ENCODE measurements at regions of chr1 and their contacts with region 1.

Region 1: GRCh38 chr1:223845810-223846682 is at the start of gene TP53BP2:
- DNase-seq: peak; percentile 68 to 94 (median 83)
- ATAC-seq: peak; percentile 82
- H3K4me3 ChIP-seq: peak within 1 kb of the TSS; percentile 74
- H3K4me3 Mint-ChIP-seq: peak within 1 kb of the TSS; percentile 99
- H3K27ac ChIP-seq: peak within 1 kb of the TSS; percentile 84 to 93
- H3K27ac Mint-ChIP-seq: peak within 1 kb of the TSS; percentile 100
- H3K4me1 ChIP-seq: peaks cover 30% of the 10 kb centered on the region
- H3K4me1 Mint-ChIP-seq: peaks cover 43% of the 10 kb centered on the region
- H3K27me3 ChIP-seq: no peaks in the 10 kb centered on the region
- H3K27me3 Mint-ChIP-seq: no peaks in the 10 kb centered on the region
- CTCF ChIP-seq: peak; percentile 61
- total RNA-seq, gene TP53BP2: 104 to 119 TPM

Region 2: DNA sequence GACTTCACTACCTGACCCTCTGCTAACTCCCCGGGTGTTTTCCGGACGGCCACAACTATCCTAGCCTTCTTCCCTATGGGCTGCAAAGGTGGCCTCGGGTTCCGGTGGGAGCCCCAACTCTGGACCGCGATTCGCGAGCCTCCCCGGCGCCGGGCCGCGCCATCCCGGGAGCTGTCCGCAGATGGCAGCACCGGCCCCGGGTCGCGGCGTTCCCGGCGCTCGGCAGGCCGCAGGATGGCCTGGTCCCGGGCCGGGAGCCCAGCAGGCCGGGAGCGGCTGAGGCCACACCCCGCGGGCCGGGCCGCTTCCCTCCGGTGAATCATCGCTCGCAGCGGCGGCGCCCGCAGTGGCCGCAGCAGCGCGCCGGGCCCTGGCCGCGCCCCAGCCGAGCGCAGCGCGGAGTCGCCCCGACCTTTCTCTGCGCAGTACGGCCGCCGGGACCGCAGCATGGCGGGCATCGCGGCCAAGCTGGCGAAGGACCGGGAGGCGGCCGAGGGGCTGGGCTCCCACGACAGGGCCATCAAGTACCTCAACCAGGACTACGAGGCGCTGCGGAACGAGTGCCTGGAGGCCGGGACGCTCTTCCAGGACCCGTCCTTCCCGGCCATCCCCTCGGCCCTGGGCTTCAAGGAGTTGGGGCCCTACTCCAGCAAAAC is 133.7 kb before region 1 on chr1 and contains the start of gene CAPN2:
- CTCF ChIA-PET with region 1: interaction called, 3 read pairs
- POLR2A ChIA-PET with region 1: interaction called, 4 read pairs
- intact Hi-C with region 1: loop called in 1 of 2 experiments (anchors 5 kb)
- DNase-seq: peak; percentile 16 to 87 (median 52)
- ATAC-seq: peak; percentile 48
- H3K4me3 ChIP-seq: peak within 1 kb of the TSS; percentile 84
- H3K4me3 Mint-ChIP-seq: peak within 1 kb of the TSS; percentile 90
- H3K27ac ChIP-seq: peak within 1 kb of the TSS; percentile 68 to 77
- H3K27ac Mint-ChIP-seq: peak within 1 kb of the TSS; percentile 90
- H3K4me1 ChIP-seq: peaks cover 64% of the 10 kb centered on the region
- H3K4me1 Mint-ChIP-seq: peaks cover 65% of the 10 kb centered on the region
- H3K27me3 ChIP-seq: no peaks in the 10 kb centered on the region
- H3K27me3 Mint-ChIP-seq: no peaks in the 10 kb centered on the region
- CTCF ChIP-seq: peak; percentile 33
- total RNA-seq, gene CAPN2: 110 to 114 TPM

Region 3: GRCh38 chr1:223796210-223796609 is 49.8 kb before region 1 on chr1:
- CTCF ChIA-PET with region 1: no interaction called
- POLR2A ChIA-PET with region 1: no interaction called
- intact Hi-C with region 1: no loop called
- DNase-seq: no peak
- ATAC-seq: no peak
- H3K4me3 ChIP-seq: no peak overlapping the region
- H3K4me3 Mint-ChIP-seq: no peak overlapping the region
- H3K27ac ChIP-seq: no peak overlapping the region
- H3K27ac Mint-ChIP-seq: no peak overlapping the region
- H3K4me1 ChIP-seq: no peaks in the 10 kb centered on the region
- H3K4me1 Mint-ChIP-seq: peaks cover under 1% of the 10 kb centered on the region
- H3K27me3 ChIP-seq: no peaks in the 10 kb centered on the region
- H3K27me3 Mint-ChIP-seq: no peaks in the 10 kb centered on the region
- CTCF ChIP-seq: no peak

Region 4: DNA sequence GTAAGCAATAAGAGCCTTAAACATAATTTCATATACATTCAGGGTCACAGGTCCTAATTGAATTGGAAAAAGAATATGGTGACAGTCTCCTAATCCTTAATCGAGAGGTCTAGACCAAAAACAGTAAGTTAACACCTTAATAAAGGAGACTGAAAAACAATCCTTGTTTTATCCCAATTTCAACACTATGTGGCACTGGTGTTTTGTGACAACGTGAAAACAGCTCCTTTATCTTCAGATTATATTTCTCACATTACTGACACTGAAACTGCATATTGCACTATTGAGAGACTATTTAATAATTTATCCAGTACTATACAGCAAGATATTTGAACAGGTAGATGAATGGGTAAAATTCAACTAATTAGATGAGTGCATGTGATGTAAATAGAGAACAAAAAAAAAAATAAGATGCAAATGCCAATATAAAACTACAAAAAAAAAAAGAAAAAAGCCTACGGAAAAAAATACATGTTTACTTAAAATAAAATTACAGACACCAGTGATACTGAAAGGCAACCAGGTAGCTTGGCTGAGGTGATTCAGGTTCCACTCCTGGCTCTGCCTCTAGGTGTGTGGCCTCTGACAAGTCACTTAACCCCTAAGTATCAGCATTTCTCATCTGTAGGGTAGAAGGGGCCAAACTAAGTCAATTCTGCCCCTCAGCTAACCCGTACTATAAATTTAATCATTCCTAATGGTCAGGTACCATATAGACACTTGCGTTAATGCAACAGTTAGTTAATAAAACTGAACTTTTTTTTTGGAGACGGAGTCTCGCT is 34.2 kb before region 1 on chr1:
- CTCF ChIA-PET with region 1: interaction called, 38 read pairs
- POLR2A ChIA-PET with region 1: interaction called, 30 read pairs
- intact Hi-C with region 1: loop called (anchors 2 kb)
- DNase-seq: peak in 3 of 14 experiments; percentile 58 to 65 (median 64)
- ATAC-seq: peak; percentile 71
- H3K4me3 ChIP-seq: no peak overlapping the region
- H3K4me3 Mint-ChIP-seq: no peak overlapping the region
- H3K27ac ChIP-seq: no peak overlapping the region
- H3K27ac Mint-ChIP-seq: peak overlapping the region; percentile 35
- H3K4me1 ChIP-seq: peaks cover 15% of the 10 kb centered on the region
- H3K4me1 Mint-ChIP-seq: peaks cover 38% of the 10 kb centered on the region
- H3K27me3 ChIP-seq: no peaks in the 10 kb centered on the region
- H3K27me3 Mint-ChIP-seq: no peaks in the 10 kb centered on the region
- CTCF ChIP-seq: peak; percentile 73

Region 5: DNA sequence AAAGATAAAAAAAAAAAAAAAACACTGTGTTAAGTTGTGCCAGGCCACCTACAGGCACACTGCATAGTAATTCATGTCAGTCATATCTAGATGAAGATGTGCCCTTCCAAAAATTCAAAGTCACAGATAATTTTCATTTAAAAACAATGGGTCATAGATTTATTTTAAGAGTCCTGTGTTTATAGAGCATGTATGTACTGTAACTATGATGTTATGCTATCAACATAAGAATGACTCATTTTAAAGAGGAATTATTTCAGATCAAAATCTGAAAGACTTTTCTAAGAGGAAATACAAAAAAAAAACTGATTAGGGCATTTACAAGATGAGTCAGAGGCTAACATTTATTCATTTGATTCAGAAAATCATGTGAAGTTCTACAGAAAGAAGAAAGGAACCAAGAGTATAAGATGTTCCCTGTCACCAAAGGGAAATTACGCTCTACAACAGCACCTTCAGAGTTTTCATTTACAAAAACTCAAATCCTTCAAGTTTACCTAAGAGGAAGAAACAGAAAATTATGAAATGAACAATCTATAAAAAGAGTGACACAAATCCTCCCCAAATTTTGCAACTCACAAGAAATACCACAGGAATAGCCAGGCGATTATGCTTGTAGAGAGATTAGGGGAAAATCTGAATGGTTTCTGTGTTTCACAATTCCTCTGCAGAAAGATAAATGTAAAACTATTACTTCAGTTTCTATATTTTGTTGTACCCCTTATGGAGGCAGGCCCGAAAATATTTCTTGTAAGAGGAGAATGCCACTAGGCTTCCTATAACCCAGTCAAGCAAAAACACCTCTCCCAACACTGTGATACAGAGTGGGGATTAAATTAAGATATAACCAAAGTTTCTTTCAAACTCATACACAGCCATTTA is 14.1 kb before region 1 on chr1:
- CTCF ChIA-PET with region 1: interaction called, 8 read pairs
- POLR2A ChIA-PET with region 1: interaction called, 78 read pairs
- intact Hi-C with region 1: loop called in 1 of 2 experiments (anchors 1 kb)
- DNase-seq: peak in 3 of 14 experiments; percentile 50 to 71 (median 65)
- ATAC-seq: peak; percentile 69
- H3K4me3 ChIP-seq: no peak overlapping the region
- H3K4me3 Mint-ChIP-seq: peak overlapping the region; percentile 39
- H3K27ac ChIP-seq: peak overlapping the region; percentile 64 to 69
- H3K27ac Mint-ChIP-seq: no peak overlapping the region
- H3K4me1 ChIP-seq: peaks cover 36% of the 10 kb centered on the region
- H3K4me1 Mint-ChIP-seq: peaks cover 18% of the 10 kb centered on the region
- H3K27me3 ChIP-seq: no peaks in the 10 kb centered on the region
- H3K27me3 Mint-ChIP-seq: no peaks in the 10 kb centered on the region
- CTCF ChIP-seq: peak; percentile 16

Region 6: DNA sequence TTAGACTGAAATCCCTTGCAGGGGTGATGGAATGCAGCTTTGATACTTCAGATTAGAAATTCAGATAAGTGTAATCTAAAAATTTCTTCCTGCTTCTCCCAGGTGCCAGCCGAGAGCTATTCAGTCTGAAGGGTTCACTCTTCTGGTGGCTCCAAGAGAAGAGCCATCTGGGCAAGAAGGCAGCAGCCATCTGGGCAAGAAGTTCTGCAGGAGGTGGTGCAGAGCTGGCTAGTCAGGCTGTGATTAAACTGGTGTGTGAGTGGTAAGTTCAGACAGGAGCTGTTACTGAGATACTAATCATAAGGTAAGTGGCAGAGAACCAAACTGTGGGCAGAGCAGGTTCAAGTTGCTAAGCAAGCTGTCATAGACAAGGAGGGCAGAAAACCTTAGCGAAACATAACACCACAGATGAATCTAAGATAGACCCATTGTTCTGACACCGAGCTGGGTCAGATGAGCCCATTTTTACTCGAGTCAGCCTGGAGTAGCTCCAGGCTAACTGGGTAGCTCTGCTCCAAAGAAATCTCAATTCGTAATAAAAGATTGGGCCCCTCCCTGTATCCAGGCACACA is 14.1 kb after region 1 on chr1:
- CTCF ChIA-PET with region 1: interaction called, 3 read pairs
- POLR2A ChIA-PET with region 1: interaction called, 13 read pairs
- intact Hi-C with region 1: no loop called
- DNase-seq: no peak
- ATAC-seq: no peak
- H3K4me3 ChIP-seq: no peak overlapping the region
- H3K4me3 Mint-ChIP-seq: no peak overlapping the region
- H3K27ac ChIP-seq: no peak overlapping the region
- H3K27ac Mint-ChIP-seq: no peak overlapping the region
- H3K4me1 ChIP-seq: no peaks in the 10 kb centered on the region
- H3K4me1 Mint-ChIP-seq: no peaks in the 10 kb centered on the region
- H3K27me3 ChIP-seq: no peaks in the 10 kb centered on the region
- H3K27me3 Mint-ChIP-seq: no peaks in the 10 kb centered on the region
- CTCF ChIP-seq: no peak

Region 7: DNA sequence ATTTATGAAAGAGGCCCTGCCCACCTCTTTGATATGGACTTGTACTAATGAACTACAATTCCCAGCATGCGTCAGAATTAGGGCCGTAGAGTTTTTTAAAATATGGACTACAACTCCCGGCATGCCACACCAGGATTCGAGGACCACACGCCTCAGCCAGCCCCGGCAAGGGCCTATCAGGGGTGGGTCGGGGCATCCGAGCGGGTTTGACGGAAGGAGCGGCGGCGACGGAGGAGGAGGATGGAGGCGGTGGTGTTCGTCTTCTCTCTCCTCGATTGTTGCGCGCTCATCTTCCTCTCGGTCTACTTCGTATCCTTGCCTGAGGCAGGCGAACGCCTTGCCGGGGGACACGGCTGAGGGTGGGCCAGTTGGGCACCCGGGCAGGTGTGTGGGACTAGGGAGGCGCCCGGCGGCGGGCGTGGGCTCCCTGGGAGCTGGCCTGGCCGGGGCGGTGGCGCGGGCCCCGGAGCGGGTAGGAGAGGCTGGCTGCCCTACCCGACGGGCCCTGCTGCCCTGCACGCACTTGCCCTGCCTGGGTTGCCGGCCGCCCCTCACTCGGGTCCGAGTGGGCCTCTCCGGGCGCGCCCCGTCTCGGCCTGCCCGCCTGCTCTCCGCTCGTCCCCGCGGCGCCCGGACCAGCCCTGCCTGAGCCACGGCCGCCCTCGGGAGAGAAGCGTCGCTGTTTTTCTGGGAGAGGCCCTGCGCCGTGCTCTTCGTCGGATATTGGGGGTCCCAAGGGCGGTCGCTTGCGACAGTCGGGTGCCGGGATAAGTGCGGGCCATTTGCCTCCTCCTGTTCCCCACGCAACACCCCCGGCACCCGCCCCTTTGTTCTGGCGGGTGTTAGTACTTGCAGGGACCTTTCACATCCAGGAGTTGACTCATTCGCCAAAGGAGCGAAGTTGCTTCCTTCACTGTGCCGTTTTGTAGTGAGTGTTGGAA is 510.9 kb after region 1 on chr1 and contains the start of gene CNIH4:
- CTCF ChIA-PET with region 1: no interaction called
- POLR2A ChIA-PET with region 1: no interaction called
- intact Hi-C with region 1: loop called in 1 of 2 experiments (anchors 10 kb)
- DNase-seq: peak; percentile 83 to 97 (median 88)
- ATAC-seq: peak; percentile 99
- H3K4me3 ChIP-seq: peak within 1 kb of the TSS; percentile 80
- H3K4me3 Mint-ChIP-seq: peak within 1 kb of the TSS; percentile 99
- H3K27ac ChIP-seq: peak within 1 kb of the TSS; percentile 56 to 72
- H3K27ac Mint-ChIP-seq: peak within 1 kb of the TSS; percentile 80
- H3K4me1 ChIP-seq: peaks cover 40% of the 10 kb centered on the region
- H3K4me1 Mint-ChIP-seq: peaks cover 45% of the 10 kb centered on the region
- H3K27me3 ChIP-seq: no peaks in the 10 kb centered on the region
- H3K27me3 Mint-ChIP-seq: no peaks in the 10 kb centered on the region
- CTCF ChIP-seq: no peak
- total RNA-seq, gene CNIH4: 31.2 to 33.6 TPM

Measured in CD4-positive, alpha-beta T cell (primary cell).